CD4-positive, alpha-beta memory T cell (primary cell): ENCODE measurements at regions of chr2 and their contacts with region 1.

Region 1: GRCh38 chr2:181457121-181457740 is at the start of gene ITGA4:
- DNase-seq: peak; percentile 80 to 86 (median 83)
- H3K4me3 ChIP-seq: peak within 1 kb of the TSS; percentile 25 to 91
- H3K4me3 Mint-ChIP-seq: peak within 1 kb of the TSS; percentile 93 to 99 (median 96)
- H3K27ac ChIP-seq: peak within 1 kb of the TSS; percentile 86
- H3K27ac Mint-ChIP-seq: peak within 1 kb of the TSS; percentile 87 to 98 (median 96)
- H3K4me1 ChIP-seq: peaks cover 30% of the 10 kb centered on the region
- H3K4me1 Mint-ChIP-seq: peaks cover 30 to 73% (median 43%) of the 10 kb centered on the region in 4 donors
- H3K27me3 ChIP-seq: no peaks in the 10 kb centered on the region
- H3K27me3 Mint-ChIP-seq: no peaks in the 10 kb centered on the region
- total RNA-seq, gene ITGA4: 278 to 297 TPM

Region 2: DNA sequence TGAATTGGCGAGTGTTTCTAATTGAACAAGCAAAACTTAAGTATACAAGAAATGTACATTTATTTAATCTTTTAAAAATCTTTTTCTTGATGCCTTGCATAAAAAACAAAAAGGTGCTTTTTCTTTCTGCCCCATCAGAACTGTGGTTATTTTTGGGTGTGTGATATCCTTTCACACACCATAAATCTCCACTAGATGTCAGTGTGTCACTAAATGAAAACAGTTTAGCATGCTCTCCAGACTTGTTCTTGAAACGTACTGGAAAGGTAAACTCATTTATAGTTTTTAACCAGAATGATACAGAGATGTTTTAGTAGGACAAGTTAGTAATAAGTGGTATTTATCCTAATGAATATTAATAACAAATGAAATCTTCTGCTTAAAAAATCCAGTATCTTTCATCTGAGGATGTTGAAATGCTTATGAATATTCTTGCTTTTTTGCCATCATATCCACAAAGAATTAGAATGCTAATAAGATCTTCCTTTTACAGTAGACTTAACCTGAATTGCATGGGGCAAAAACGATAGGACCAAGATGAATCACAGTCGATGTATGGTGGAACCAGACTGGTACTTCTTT is 380.0 kb before region 1 on chr2:
- CTCF ChIA-PET with region 1: interaction called, 3 read pairs
- POLR2A ChIA-PET with region 1: interaction called, 3 read pairs
- intact Hi-C with region 1: loop called (anchors 1 kb)
- DNase-seq: peak; percentile 36 to 69 (median 65)
- H3K4me3 ChIP-seq: no peak overlapping the region
- H3K4me3 Mint-ChIP-seq: no peak overlapping the region
- H3K27ac ChIP-seq: no peak overlapping the region
- H3K27ac Mint-ChIP-seq: no peak overlapping the region
- H3K4me1 ChIP-seq: no peaks in the 10 kb centered on the region
- H3K4me1 Mint-ChIP-seq: peaks cover 0 to 3% (median 2%) of the 10 kb centered on the region in 4 donors
- H3K27me3 ChIP-seq: no peaks in the 10 kb centered on the region
- H3K27me3 Mint-ChIP-seq: peaks cover 0 to 2% of the 10 kb centered on the region in 2 donors

Region 3: DNA sequence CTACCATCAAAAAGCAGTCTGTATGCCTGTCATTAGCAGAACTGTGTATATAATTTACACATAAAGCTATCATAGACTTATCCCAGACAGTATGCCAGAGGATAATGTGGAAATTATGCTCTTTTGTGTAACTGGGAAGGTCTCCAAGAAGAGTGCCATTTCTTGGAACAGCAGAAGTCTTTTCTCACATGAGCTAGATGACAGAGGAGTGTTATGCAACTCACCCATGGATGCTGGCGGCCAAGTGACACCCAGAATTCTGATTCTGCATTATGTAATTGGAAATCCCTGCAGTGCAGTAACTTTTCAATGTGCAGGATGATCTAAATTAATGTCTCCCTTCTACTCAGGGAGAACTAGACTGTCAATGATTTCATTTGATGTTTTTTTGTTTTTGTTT is 316.8 kb before region 1 on chr2:
- CTCF ChIA-PET with region 1: interaction called, 11 read pairs
- POLR2A ChIA-PET with region 1: interaction called, 44 read pairs
- intact Hi-C with region 1: no loop called
- DNase-seq: peak in 1 of 5 donors; percentile 66
- H3K4me3 ChIP-seq: no peak overlapping the region
- H3K4me3 Mint-ChIP-seq: peak overlapping the region in 7 of 8 donors; percentile 61 to 91 (median 82)
- H3K27ac ChIP-seq: peak overlapping the region; percentile 74
- H3K27ac Mint-ChIP-seq: peak overlapping the region; percentile 86 to 99 (median 98)
- H3K4me1 ChIP-seq: peaks cover 72% of the 10 kb centered on the region
- H3K4me1 Mint-ChIP-seq: peaks cover 44 to 78% (median 58%) of the 10 kb centered on the region in 4 donors
- H3K27me3 ChIP-seq: no peaks in the 10 kb centered on the region
- H3K27me3 Mint-ChIP-seq: no peaks in the 10 kb centered on the region

Region 4: GRCh38 chr2:181223234-181223633 is 234.0 kb before region 1 on chr2:
- CTCF ChIA-PET with region 1: interaction called, 4 read pairs
- POLR2A ChIA-PET with region 1: interaction called, 27 read pairs
- intact Hi-C with region 1: no loop called
- DNase-seq: peak in 4 of 5 donors; percentile 35 to 63 (median 48)
- H3K4me3 ChIP-seq: no peak overlapping the region
- H3K4me3 Mint-ChIP-seq: peak overlapping the region in 7 of 8 donors; percentile 53 to 86 (median 65)
- H3K27ac ChIP-seq: peak overlapping the region; percentile 61
- H3K27ac Mint-ChIP-seq: peak overlapping the region; percentile 88 to 99 (median 94)
- H3K4me1 ChIP-seq: peaks cover 37% of the 10 kb centered on the region
- H3K4me1 Mint-ChIP-seq: peaks cover 22 to 40% (median 29%) of the 10 kb centered on the region in 4 donors
- H3K27me3 ChIP-seq: no peaks in the 10 kb centered on the region
- H3K27me3 Mint-ChIP-seq: no peaks in the 10 kb centered on the region

Region 5: DNA sequence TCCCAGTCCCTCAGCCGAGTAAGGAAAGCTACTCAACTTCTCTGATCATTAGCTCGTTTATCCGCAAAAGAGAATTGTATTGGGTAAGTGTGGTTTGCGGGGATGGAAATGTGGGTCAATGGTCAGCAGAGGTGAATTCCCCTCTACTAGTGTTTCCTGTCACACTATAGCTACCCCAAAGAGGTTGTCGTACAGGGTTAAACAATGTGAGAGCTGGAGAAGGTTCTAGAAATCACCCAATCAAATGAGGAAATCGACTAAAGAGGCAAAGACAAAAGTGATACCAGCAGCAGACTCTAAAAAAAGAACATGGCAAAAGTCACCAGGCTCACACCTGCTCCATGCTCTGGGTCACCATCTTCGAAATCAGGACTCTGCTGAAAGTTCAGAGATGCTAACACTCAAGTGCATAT is 144.7 kb before region 1 on chr2:
- CTCF ChIA-PET with region 1: interaction called, 46 read pairs
- POLR2A ChIA-PET with region 1: interaction called, 374 read pairs
- intact Hi-C with region 1: loop called (anchors 2 kb)
- DNase-seq: peak; percentile 38 to 55 (median 45)
- H3K4me3 ChIP-seq: peak overlapping the region in 1 of 2 donors; percentile 27
- H3K4me3 Mint-ChIP-seq: peak overlapping the region; percentile 12 to 77 (median 71)
- H3K27ac ChIP-seq: peak overlapping the region; percentile 46
- H3K27ac Mint-ChIP-seq: peak overlapping the region; percentile 88 to 97 (median 95)
- H3K4me1 ChIP-seq: peaks cover 75% of the 10 kb centered on the region
- H3K4me1 Mint-ChIP-seq: peaks cover 34 to 56% (median 46%) of the 10 kb centered on the region in 4 donors
- H3K27me3 ChIP-seq: no peaks in the 10 kb centered on the region
- H3K27me3 Mint-ChIP-seq: no peaks in the 10 kb centered on the region

Region 6: GRCh38 chr2:181430406-181431118 is 26.7 kb before region 1 on chr2:
- CTCF ChIA-PET with region 1: interaction called, 11 read pairs
- POLR2A ChIA-PET with region 1: interaction called, 6 read pairs
- intact Hi-C with region 1: loop called (anchors 1 kb)
- DNase-seq: peak; percentile 34 to 53 (median 42)
- H3K4me3 ChIP-seq: no peak overlapping the region
- H3K4me3 Mint-ChIP-seq: peak overlapping the region in 1 of 8 donors; percentile 23
- H3K27ac ChIP-seq: no peak overlapping the region
- H3K27ac Mint-ChIP-seq: peak overlapping the region; percentile 38 to 85 (median 74)
- H3K4me1 ChIP-seq: peaks cover 13% of the 10 kb centered on the region
- H3K4me1 Mint-ChIP-seq: peaks cover 7 to 16% (median 12%) of the 10 kb centered on the region in 4 donors
- H3K27me3 ChIP-seq: no peaks in the 10 kb centered on the region
- H3K27me3 Mint-ChIP-seq: no peaks in the 10 kb centered on the region

Region 7: DNA sequence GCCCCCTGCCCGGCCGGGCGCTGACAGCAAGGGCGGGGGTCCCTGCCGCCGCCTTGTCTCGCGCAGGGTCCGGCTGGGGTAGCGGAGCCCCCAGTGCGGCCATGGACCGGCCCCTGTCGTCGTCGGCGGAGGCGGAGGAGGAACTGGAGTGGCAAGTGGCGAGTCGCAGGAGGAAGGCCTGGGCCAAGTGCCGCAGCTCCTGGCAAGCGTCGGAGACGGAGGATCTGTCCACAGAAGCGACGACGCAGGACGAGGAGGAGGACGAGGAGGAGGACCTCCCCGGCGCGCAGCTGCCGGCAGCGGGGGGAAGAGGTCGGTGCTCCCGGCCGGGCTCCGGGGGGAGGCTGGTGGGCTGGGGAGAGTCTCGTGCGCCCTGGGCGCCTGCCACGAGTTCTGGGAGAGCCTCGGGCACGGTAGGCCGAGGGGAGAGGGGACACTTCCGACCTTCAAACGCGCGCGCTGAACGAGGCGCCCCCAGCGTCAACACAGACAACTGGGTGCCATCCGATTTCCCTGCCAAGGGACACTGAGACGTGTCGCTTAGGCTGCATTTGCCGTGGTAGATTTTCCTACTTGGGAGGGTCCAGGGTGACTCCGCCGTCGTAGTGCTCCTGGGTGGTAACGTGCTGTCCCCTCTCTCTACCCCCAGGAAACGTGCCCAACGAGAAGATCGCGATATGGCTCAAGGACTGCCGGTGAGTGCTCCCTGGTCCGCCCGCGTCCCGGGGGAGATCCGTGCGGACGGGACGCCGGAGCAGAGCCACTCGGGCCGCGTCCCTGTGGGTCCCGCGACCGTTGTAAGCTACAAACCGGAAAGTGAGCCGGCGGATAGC is 435.0 kb after region 1 on chr2:
- CTCF ChIA-PET with region 1: no interaction called
- POLR2A ChIA-PET with region 1: interaction called, 3 read pairs
- intact Hi-C with region 1: loop called (anchors 5 kb)
- DNase-seq: peak; percentile 58 to 65 (median 60)
- H3K4me3 ChIP-seq: peak overlapping the region; percentile 70 to 86
- H3K4me3 Mint-ChIP-seq: peak overlapping the region; percentile 88 to 95 (median 92)
- H3K27ac ChIP-seq: peak overlapping the region; percentile 44
- H3K27ac Mint-ChIP-seq: peak overlapping the region; percentile 55 to 91 (median 87)
- H3K4me1 ChIP-seq: peaks cover 25% of the 10 kb centered on the region
- H3K4me1 Mint-ChIP-seq: peaks cover 23 to 51% (median 29%) of the 10 kb centered on the region in 4 donors
- H3K27me3 ChIP-seq: no peaks in the 10 kb centered on the region
- H3K27me3 Mint-ChIP-seq: peaks cover 13 to 15% of the 10 kb centered on the region in 2 donors